ENCODE measurements at regions of chr11 and their contacts with region 1.

Region 1: DNA sequence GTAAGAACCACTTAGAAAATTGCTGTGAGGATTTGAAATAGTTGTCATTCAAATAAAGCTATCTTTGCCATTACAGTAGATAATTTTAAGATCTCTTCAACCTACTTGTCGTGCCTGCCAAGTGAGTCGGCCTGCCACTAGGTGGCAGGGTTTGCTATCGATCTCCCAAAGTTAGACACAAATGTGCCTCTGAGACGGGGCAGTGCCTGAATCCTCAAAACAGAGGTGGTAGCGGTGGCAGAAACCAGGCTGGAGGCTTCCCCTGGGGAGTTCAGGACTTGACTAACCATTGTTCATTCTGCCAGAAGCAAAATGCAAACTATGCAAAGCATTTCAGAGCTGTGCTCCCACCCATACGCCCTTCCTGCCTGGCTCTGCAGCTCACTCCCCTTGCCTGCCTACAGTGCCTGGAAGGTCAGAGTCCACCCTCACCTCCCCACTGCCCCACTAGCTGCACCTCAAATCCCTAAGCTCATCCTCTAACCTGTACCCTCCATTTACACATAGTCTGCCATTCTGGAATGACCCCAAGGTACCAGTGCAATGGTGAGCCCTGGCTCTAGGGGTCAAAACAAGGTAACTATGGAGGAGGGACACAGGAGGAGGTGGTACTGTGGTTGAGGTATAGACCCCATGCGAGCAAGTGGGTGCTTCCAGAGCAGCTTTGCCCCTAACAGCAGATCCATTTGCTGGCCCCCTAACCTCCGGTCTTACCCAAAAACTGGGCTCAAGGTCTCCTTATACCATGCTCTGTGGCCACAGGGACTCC is 82.1 kb downstream of the C11orf58 start:
- DNase-seq: peak; percentile 74
- H3K4me3 ChIP-seq: no peak overlapping the region
- H3K27ac ChIP-seq: no peak overlapping the region
- H3K4me1 ChIP-seq: no peaks in the 10 kb centered on the region
- H3K27me3 ChIP-seq: no peaks in the 10 kb centered on the region
- CTCF ChIP-seq: peak; percentile 77 to 93
- POLR2A ChIP-seq: no peak

Region 2: DNA sequence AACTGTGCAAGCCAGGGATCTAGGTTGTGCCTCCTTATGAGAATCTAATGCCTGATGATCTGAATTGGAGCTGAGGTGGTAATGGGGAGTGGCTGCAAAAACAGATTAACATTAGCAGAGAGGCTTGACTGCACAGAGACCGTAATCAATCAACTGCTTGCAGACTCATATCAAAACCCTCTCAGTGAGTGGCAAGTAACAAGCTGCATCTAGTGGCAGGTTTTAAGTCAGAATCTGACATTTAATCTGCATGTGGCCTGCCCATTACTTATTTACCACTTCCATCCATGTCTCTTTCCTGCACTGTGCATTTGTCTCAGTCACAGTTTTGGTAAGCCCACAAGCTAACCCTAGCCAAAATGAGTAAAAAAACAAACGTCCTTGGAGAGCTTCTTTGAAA is 70.8 kb before region 1 on chr11:
- CTCF ChIA-PET with region 1: no interaction called
- POLR2A ChIA-PET with region 1: no interaction called
- dilution Hi-C with region 1: no loop called
- intact Hi-C with region 1: no loop called
- DNase-seq: no peak
- H3K4me3 ChIP-seq: no peak overlapping the region
- H3K27ac ChIP-seq: no peak overlapping the region
- H3K4me1 ChIP-seq: no peaks in the 10 kb centered on the region
- H3K27me3 ChIP-seq: no peaks in the 10 kb centered on the region
- CTCF ChIP-seq: no peak
- POLR2A ChIP-seq: no peak

Region 3: DNA sequence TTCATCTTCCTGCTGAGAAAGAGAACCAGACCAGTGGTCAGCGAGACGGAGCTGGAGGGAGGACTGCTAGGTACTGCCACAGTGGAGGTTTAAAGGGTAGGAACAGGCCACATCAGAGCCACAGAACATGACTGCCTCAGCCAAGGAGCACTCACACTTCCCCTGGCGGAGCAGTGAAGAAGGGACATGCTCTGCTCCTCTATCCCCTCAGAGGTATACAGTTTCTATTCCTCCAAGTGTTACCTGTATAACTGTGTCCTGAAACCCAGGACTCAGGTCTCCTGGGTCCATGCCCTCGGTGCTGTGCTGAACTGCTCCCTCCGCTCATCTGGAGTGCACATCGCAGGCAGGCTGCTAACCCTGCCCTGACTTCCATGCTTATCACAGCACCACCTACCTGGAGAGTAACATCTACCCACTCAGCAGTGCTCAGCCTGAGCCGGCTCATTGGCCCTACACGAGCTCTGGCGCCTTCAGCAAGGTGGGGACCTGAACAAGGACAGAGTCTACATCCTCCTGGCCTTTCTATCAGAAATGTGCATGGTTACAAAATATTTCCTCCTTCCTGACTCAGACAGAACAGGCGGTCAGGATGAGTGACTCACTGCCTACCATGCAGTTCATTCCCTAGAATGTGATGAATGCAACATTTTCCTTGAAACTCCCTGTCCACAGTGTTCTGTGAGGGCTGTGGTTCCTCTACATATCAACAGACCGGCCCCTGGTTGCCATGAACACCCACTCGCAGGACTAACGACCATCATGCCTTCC is 29.1 kb before region 1 on chr11:
- CTCF ChIA-PET with region 1: interaction called, 64 read pairs
- POLR2A ChIA-PET with region 1: no interaction called
- dilution Hi-C with region 1: no loop called
- intact Hi-C with region 1: loop called (anchors 1 kb)
- DNase-seq: peak; percentile 94
- H3K4me3 ChIP-seq: no peak overlapping the region
- H3K27ac ChIP-seq: peak overlapping the region; percentile 89
- H3K4me1 ChIP-seq: peaks cover 52% of the 10 kb centered on the region
- H3K27me3 ChIP-seq: no peaks in the 10 kb centered on the region
- CTCF ChIP-seq: no peak
- POLR2A ChIP-seq: peak; percentile 55

Region 4: GRCh38 chr11:16809886-16810668 is 10.4 kb before region 1 on chr11:
- CTCF ChIA-PET with region 1: interaction called, 34 read pairs
- POLR2A ChIA-PET with region 1: no interaction called
- dilution Hi-C with region 1: no loop called
- intact Hi-C with region 1: no loop called
- DNase-seq: peak; percentile 65
- H3K4me3 ChIP-seq: no peak overlapping the region
- H3K27ac ChIP-seq: no peak overlapping the region
- H3K4me1 ChIP-seq: no peaks in the 10 kb centered on the region
- H3K27me3 ChIP-seq: no peaks in the 10 kb centered on the region
- CTCF ChIP-seq: no peak
- POLR2A ChIP-seq: no peak

Region 5: DNA sequence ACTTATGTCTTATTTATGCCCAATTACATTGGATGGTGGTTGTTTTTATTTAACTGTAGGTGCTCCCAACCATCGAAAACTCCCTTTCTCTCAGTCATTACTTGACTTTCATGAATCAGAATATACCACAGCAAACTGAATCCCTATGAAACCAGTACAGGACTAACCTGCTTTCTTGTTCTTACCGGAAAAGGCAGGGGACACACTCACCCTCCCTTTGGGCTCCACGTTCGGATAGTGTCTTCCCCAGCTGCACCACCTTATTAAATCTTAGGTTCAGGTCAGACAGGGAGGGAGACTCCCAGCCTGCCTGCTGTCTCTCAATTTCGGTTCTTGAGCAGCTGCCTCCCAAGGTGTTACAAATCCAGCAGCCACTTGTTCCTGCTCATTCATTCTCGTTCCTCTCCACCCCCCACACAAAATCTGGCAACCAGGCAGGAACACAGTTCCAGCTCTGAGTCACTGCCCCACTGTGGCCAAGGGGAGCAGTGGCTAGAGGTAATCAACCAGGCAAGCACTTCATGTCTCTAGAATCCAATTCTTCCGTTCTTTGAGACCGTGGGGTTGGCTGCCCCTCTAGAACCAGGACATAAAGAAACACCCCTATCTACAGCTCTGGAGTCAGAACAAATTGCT is 60.7 kb after region 1 on chr11:
- CTCF ChIA-PET with region 1: interaction called, 32 read pairs
- POLR2A ChIA-PET with region 1: no interaction called
- dilution Hi-C with region 1: no loop called
- intact Hi-C with region 1: loop called (anchors 1 kb)
- DNase-seq: no peak
- H3K4me3 ChIP-seq: no peak overlapping the region
- H3K27ac ChIP-seq: no peak overlapping the region
- H3K4me1 ChIP-seq: peaks cover 3% of the 10 kb centered on the region
- H3K27me3 ChIP-seq: peaks cover 0 to 6% of the 10 kb centered on the region in 2 experiments
- CTCF ChIP-seq: peak in 1 of 2 donors; percentile 16
- POLR2A ChIP-seq: no peak

Region 6: GRCh38 chr11:16935518-16936302 is 115.2 kb after region 1 on chr11:
- CTCF ChIA-PET with region 1: interaction called, 18 read pairs
- POLR2A ChIA-PET with region 1: no interaction called
- dilution Hi-C with region 1: no loop called
- intact Hi-C with region 1: loop called (anchors 1 kb)
- DNase-seq: peak; percentile 41
- H3K4me3 ChIP-seq: no peak overlapping the region
- H3K27ac ChIP-seq: no peak overlapping the region
- H3K4me1 ChIP-seq: no peaks in the 10 kb centered on the region
- H3K27me3 ChIP-seq: peaks cover 0 to 2% of the 10 kb centered on the region in 2 experiments
- CTCF ChIP-seq: peak; percentile 57 to 72
- POLR2A ChIP-seq: no peak

Region 7: GRCh38 chr11:17014838-17015626 is 194.5 kb after region 1 on chr11:
- CTCF ChIA-PET with region 1: interaction called, 8 read pairs
- POLR2A ChIA-PET with region 1: no interaction called
- dilution Hi-C with region 1: no loop called
- intact Hi-C with region 1: loop called (anchors 1 kb)
- DNase-seq: peak; percentile 50
- H3K4me3 ChIP-seq: peak overlapping the region; percentile 12 to 66 (median 40)
- H3K27ac ChIP-seq: no peak overlapping the region
- H3K4me1 ChIP-seq: peaks cover 8% of the 10 kb centered on the region
- H3K27me3 ChIP-seq: no peaks in the 10 kb centered on the region
- CTCF ChIP-seq: peak; percentile 65 to 79
- POLR2A ChIP-seq: no peak

Measured in endothelial cell of umbilical vein (primary cell).